ENCODE measurements at regions of chr11 and their contacts with region 1.

Region 1: GRCh38 chr11:73787643-73788537 is at the start of gene MRPL48:
- DNase-seq: peak; percentile 82
- ATAC-seq: peak; percentile 97
- H3K4me3 ChIP-seq: peak within 1 kb of the TSS; percentile 74 to 96 (median 85)
- H3K27ac ChIP-seq: peak within 1 kb of the TSS; percentile 99
- H3K4me1 ChIP-seq: peaks cover 59% of the 10 kb centered on the region
- H3K27me3 ChIP-seq: no peaks in the 10 kb centered on the region
- CTCF ChIP-seq: no peak
- EP300 ChIP-seq: no peak; a peak in 1 of 4 replicates
- POLR2A ChIP-seq: peak; percentile 82 to 83
- RAD21 ChIP-seq: peak; percentile 52; the same call in 1 of the 2 replicates
- total RNA-seq, gene MRPL48: 67.9 and 97.3 TPM in 2 replicates

Region 2: DNA sequence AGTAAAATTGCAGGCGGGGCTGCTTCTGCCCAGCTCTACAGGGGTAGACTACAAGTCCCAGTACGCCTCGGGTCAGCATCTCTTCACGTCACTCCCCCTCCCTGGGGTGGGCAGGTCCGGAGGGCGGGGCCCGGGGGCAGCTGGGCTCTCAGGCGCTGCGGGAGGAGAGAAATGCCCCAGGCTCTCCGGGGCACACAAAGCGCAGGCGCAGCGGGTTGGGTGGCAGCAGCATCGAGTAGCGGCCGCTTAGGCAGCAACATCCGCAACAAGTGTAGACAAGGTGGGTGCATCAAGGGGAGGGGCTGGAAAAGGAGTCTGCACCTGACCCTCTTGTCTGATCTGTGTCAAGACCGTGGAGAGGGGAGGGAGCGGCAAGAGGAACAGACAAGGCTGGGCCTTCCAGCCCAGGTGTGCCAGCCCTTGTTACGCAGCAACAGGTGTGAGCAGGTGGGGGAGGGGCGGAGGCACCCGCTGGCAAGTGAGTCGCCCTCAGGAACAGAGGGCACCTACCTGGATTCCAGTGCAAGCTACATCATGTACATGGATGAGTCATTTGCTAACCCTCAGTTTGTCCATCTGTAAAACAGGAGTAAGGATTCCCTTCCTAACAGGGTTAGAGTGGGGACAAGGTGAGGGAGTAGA is 140.3 kb before region 1 on chr11:
- CTCF ChIA-PET with region 1: no interaction called
- POLR2A ChIA-PET with region 1: no interaction called
- in situ Hi-C with region 1: no loop called
- intact Hi-C with region 1: no loop called
- DNase-seq: peak; percentile 90
- ATAC-seq: peak; percentile 80
- H3K4me3 ChIP-seq: peak overlapping the region; percentile 57 to 76 (median 70)
- H3K27ac ChIP-seq: peak overlapping the region; percentile 53
- H3K4me1 ChIP-seq: peaks cover 72% of the 10 kb centered on the region
- H3K27me3 ChIP-seq: peaks cover 0 to 1% of the 10 kb centered on the region in 2 experiments; a peak in 2 of 5 replicates
- CTCF ChIP-seq: peak; percentile 7; the same call in 1 of the 2 replicates
- EP300 ChIP-seq: no peak
- POLR2A ChIP-seq: peak; percentile 49 to 62
- RAD21 ChIP-seq: peak; percentile 16; the same call in 1 of the 2 replicates

Region 3: DNA sequence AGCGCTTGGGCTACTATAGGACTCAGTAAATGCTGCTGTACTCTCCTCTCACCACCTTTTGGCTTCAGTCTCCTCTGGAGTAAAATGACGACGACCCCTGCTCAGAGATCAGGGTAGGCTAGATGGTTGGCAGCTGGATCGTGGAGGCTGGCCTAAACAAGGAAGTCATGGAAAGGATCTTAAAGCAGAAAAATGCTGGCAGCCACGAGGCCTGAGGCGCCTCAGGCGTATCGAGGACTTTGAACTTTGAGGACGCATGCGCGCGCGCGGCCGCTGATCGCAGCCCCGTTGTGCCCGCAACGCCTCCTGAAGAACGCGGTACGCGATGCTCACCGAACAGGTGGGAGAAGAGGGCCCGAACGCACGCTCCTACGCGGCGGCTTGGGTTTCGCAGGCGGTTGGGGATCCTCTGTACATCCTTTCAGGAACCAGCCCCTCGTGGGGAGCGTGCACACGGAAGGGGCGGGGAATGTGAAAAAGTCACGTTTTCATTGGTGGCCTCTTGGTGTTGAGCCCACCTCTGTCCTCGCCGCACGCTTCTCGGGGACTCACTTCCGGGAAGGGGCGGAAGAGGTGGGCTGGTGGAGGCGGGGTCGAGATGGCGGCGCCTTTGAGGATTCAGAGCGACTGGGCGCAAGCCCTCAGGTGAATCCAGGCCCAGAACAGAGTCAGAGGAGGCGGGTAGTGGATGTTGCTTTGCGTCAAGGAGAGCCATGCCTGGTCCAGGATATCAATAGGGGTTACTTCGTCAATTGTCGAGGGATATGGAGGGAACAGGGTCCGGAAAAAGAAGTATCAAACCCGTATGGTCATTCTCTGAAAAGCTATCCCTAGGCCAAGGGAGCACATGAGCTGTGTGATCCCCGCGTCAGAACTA is 88.8 kb after region 1 on chr11 and contains the starts of genes COA4 and PAAF1:
- CTCF ChIA-PET with region 1: no interaction called
- POLR2A ChIA-PET with region 1: interaction called, 3 read pairs
- in situ Hi-C with region 1: no loop called
- intact Hi-C with region 1: loop called (anchors 2 kb)
- DNase-seq: peak; percentile 98
- ATAC-seq: peak; percentile 96
- H3K4me3 ChIP-seq: peak within 1 kb of the TSS; percentile 70 to 88 (median 82)
- H3K27ac ChIP-seq: peak within 1 kb of the TSS; percentile 98
- H3K4me1 ChIP-seq: peaks cover 53% of the 10 kb centered on the region
- H3K27me3 ChIP-seq: no peaks in the 10 kb centered on the region; a peak in 1 of 5 replicates
- CTCF ChIP-seq: peak; percentile 9; the same call in 1 of the 2 replicates
- EP300 ChIP-seq: peak in 1 of 2 experiments; percentile 5; a peak in 2 of 4 replicates
- POLR2A ChIP-seq: peak; percentile 92
- RAD21 ChIP-seq: peak; percentile 12; the same call in 1 of the 2 replicates
- total RNA-seq, gene COA4: 107 and 115 TPM in 2 replicates
- total RNA-seq, gene PAAF1: 28.8 and 46.4 TPM in 2 replicates